Mucosa of descending colon (tissue), 3 donors: ENCODE measurements at regions of chr18 and their contacts with region 1.

Region 1: DNA sequence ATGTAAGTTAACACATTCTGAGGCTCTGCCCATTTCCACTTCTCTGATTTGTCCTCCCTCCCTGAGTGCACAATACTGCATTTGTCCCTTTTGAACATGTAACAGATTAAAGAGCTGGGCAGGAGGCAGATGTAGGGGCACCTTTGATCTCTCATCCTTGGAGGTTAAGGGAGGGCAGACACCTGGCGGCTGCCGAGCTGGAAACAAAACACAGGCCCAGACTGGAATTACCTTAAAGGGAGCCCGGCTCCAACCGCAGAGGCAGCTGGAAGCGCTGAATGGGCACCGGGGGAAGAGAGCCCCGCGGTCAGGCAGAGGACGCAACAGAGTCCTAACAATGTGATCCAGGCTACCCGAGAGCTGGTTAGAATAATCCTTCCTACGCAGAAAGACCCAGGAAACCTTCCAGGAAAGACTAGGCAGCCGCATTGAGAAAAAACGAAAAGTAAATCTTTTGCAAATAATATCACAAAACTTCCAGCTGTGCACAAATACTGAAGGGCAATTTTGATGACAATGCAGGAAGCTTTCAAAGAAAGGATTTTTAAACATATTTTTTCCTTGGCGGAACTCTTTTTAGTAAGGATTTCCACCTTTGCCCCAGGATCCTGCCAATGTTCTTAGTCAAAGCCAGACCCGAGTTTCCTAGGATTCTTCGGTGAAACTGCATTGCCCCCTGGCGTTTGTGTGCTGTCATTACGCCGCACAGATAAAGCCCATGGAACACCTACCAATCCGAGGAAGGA is 216.0 kb downstream of the TGIF1 start:
- DNase-seq: peak; percentile 79 to 88 (median 87)
- ATAC-seq: peak; percentile 85
- H3K4me3 ChIP-seq: no peak overlapping the region
- H3K4me1 ChIP-seq: peaks cover 24% of the 10 kb centered on the region
- CTCF ChIP-seq: peak; percentile 88

Region 2: DNA sequence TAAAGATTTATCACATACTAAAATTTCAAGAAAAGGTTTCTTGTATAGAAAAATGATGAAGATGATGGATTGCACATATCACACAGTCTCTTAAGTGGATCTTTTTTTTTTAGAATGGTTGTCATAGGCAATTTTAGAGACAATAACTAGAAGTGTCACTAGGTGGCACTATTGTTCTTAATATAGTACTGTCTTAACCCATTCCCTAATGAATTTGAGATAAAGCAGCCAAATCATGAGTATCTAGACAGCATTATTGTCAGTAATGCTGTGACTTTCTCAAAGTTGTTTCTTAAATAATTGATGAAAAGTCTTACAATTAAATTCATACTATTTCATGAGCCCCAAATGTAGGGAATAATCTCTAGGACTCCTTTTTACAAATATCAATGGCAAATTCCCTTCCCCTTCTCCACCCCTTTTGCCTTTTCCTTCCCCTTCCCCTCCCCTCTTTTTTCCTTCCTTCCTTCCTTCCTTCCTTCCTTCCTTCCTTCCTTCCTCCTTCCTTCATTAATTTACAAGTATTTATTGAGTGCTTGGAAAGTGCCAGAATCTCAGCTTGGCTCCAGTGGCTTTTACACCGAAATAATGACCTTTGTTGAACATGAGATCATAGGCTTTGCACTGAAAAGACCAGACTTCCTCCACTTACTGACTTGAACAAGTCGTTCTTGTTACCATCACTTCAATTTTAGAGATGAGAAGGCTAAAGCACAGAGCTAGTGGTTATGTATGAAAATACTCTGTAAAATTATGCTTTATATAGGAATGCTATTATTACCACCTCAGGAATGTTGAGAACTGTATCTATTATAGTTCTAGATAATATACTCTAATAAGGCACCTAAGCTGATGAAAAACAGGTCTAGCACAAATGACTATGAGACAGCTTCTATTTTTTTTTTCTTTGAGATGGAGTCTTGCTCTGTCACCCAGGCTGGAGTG is 384.2 kb before region 1 on chr18:
- intact Hi-C with region 1: loop called (anchors 1 to 2 kb)
- DNase-seq: peak in 1 of 3 donors; percentile 44
- ATAC-seq: peak; percentile 76
- H3K4me3 ChIP-seq: no peak overlapping the region
- H3K4me1 ChIP-seq: no peaks in the 10 kb centered on the region
- CTCF ChIP-seq: no peak

Region 3: DNA sequence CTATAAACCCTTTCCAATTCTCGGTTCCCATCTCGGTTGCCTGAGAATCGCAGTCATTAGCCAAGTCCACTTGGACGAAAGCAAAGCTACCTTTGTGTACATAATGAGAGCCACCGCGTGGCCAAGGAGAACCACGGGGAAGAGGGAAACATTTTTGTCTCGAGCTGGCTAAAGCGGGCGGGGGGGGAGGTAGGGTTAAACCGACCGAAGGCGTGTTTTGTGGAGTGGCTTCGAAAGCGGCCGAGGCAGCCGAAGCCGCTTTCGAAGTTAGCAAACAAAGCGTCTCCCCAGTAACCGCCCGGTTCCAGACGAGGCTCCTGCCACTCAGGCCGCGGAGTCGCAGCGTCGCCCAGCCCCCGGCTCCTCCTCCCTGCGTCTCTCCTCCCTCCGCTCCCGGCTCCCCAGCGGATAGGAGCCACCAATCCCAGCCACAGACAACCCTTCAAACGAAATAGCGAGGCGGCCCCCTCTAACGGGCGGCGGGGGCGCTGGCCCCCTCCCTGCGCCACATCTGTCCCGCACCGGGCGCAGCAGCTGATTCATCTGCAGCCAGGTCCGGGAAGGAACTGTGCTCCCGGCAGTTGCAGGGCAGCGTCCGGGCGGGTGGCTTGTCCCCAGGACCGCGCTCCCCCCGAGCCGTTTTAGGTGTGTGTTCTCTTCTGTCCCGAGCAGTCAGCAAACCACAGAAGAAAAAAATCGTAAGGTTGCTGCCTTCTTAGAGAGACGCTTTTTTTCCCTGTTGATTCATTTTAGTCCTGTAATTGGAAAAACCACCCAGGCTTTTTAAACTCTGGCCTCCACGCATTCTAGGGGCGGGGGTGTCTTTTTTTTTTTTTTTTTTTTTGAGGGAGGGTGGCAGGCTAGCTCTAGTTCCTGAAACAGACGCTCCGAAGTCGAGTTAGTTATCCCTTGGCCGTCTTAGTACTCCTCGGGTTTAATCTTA is 217.8 kb before region 1 on chr18:
- intact Hi-C with region 1: loop called in 1 of 2 experiments (anchors 10 kb)
- DNase-seq: peak; percentile 93 to 97 (median 96)
- ATAC-seq: peak; percentile 79
- H3K4me3 ChIP-seq: peak overlapping the region; percentile 85
- H3K4me1 ChIP-seq: peaks cover 6% of the 10 kb centered on the region
- CTCF ChIP-seq: no peak

Region 4: DNA sequence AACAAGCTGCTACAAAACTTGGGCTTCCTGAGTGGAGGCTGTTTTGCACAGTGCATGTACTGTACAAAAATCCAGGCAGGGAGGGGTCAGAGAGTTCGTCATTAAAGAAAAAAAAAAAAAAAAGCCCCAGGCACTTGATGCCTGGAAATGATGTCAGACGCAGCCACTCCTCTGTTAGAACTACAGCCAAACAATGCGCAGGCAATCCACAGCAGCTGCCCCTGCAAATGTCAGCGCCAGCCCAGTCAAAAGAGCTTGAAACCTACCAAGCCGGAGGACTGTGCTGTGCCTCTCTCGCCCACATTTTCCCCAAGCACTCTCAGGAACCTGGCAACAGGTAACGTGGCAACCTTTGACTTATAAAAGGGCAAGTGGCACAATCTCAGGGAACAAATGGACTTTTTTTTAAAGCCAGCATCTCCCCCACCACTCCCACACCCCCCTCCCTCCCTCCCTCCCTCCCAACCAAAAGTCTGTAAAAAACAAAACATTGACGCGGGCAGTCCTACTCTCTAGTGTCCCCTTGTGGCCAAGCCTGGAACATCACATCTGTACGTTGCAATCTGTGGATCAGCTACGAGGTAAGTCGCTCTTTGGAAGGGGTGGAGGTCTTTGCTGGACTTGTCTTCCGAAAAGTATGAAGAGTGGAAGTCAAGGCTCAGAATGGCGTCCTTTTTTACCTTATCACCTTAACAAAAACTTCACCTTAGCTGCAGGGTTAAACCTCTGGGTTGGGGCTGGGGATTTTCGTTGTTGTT is 71.9 kb before region 1 on chr18:
- intact Hi-C with region 1: loop called (anchors 5 to 10 kb)
- DNase-seq: peak; percentile 84 to 97 (median 85)
- ATAC-seq: peak; percentile 79
- H3K4me3 ChIP-seq: no peak overlapping the region
- H3K4me1 ChIP-seq: peaks cover 43% of the 10 kb centered on the region
- CTCF ChIP-seq: peak; percentile 91

Region 5: DNA sequence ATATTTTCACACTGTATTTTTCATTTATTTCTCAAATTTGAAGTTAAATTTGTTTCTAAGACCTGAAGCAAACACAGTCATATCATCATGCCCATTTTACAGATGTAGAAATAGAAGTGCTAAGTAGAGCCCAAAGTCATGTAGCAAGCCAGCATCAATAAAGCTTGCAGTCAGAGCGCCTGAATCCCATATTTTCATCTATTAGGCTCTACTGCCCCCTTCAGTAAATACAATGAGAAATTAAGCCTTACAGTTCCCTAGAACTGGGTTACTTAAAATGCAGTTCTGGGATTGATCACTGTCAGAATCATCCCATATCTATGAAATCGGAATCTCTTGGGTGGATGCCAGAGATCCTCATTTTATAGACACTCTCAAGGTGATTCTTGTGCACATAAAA is 203.9 kb after region 1 on chr18:
- intact Hi-C with region 1: no loop called
- DNase-seq: no peak
- ATAC-seq: peak; percentile 45
- H3K4me3 ChIP-seq: no peak overlapping the region
- H3K4me1 ChIP-seq: no peaks in the 10 kb centered on the region
- CTCF ChIP-seq: no peak